ENCODE measurements at regions of chr1 and their contacts with region 1.

Region 1: GRCh38 chr1:211514030-211514754 is 22.2 kb upstream of the RD3 start:
- DNase-seq: peak; percentile 94
- H3K4me3 Mint-ChIP-seq: peak overlapping the region; percentile 52
- H3K27ac Mint-ChIP-seq: peak overlapping the region; percentile 42
- H3K4me1 Mint-ChIP-seq: peaks cover 42% of the 10 kb centered on the region
- H3K27me3 Mint-ChIP-seq: no peaks in the 10 kb centered on the region
- CTCF ChIP-seq: peak; percentile 81

Region 2: GRCh38 chr1:210400043-210400840 is 1114.0 kb before region 1 on chr1:
- CTCF ChIA-PET with region 1: no interaction called
- intact Hi-C with region 1: loop called (anchors 5 kb)
- DNase-seq: peak; percentile 77
- H3K4me3 Mint-ChIP-seq: no peak overlapping the region
- H3K27ac Mint-ChIP-seq: no peak overlapping the region
- H3K4me1 Mint-ChIP-seq: peaks cover 8% of the 10 kb centered on the region
- H3K27me3 Mint-ChIP-seq: no peaks in the 10 kb centered on the region
- CTCF ChIP-seq: peak; percentile 82

Region 3: DNA sequence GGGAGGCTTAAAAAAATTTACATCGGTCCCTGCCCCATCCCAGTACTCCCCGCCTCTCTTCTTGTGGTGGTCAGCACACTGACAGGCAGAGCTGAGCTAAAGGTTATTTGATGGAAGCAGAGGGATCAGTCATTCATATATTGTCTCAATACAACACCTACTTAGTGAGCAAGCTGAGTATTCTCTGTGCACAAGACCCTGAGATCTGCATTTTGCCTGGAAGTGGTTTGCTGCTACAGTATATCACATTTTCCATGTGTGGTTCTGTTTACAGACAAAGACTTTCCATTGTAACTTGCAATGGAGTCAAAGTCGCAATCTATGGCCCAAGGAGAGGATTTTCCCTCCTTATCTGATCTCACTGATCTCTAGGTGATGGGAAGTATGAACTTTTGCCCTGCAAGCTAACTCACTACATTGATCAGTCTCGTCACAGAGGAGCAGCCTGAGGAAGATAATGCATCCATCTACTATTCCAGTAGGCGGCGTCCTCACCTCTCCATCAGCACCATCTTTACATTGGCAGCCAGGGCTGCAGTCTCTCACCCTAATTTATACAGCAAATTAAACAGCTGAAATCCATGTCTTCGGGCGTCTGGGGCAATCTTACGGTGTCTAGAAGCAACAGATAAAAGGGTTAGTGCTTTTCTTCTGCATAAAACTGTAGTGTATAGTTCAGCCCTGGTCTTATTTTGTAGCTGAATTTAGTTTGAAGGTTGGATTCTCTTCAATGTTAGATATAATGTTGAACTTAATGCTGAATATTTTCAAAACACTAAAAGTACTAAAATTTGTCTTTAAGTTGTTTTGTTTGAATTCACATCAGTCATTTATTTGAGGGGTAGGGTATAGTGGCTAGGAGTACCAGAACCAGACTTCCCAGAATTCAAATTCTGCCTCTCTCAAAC is 190.8 kb before region 1 on chr1:
- CTCF ChIA-PET with region 1: interaction called, 7 read pairs
- intact Hi-C with region 1: loop called (anchors 1 kb)
- DNase-seq: peak; percentile 70
- H3K4me3 Mint-ChIP-seq: no peak overlapping the region
- H3K27ac Mint-ChIP-seq: no peak overlapping the region
- H3K4me1 Mint-ChIP-seq: peaks cover 25% of the 10 kb centered on the region
- H3K27me3 Mint-ChIP-seq: no peaks in the 10 kb centered on the region
- CTCF ChIP-seq: peak; percentile 73

Region 4: GRCh38 chr1:211469938-211470529 is 44.2 kb before region 1 on chr1:
- CTCF ChIA-PET with region 1: interaction called, 12 read pairs
- intact Hi-C with region 1: loop called (anchors 1 kb)
- DNase-seq: peak; percentile 94
- H3K4me3 Mint-ChIP-seq: no peak overlapping the region
- H3K27ac Mint-ChIP-seq: no peak overlapping the region
- H3K4me1 Mint-ChIP-seq: peaks cover 13% of the 10 kb centered on the region
- H3K27me3 Mint-ChIP-seq: no peaks in the 10 kb centered on the region
- CTCF ChIP-seq: peak; percentile 98

Region 5: GRCh38 chr1:211551628-211552460 is 37.7 kb after region 1 on chr1:
- CTCF ChIA-PET with region 1: interaction called, 7 read pairs
- intact Hi-C with region 1: loop called (anchors 5 kb)
- DNase-seq: peak; percentile 56
- H3K4me3 Mint-ChIP-seq: peak overlapping the region; percentile 31
- H3K27ac Mint-ChIP-seq: peak overlapping the region; percentile 40
- H3K4me1 Mint-ChIP-seq: peaks cover 14% of the 10 kb centered on the region
- H3K27me3 Mint-ChIP-seq: no peaks in the 10 kb centered on the region
- CTCF ChIP-seq: no peak

Region 6: DNA sequence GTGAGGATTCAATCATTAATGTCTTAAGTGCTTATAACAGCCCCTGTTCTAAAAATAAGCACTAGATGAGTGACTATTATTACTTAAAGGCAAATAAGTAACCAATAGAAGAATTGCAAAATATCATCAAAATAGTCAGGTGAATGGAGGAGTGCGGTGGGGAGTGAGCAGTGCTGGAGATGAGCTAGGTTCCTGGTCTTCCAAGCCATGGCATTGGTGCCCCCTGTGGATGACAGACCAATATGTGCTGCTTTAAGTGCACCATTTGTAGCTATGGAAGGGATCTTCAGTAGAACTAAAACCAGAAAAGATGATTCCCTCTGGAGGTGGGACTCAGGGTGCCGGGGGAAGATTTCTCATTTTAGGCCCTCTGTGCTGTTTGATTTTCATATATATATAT is 110.8 kb after region 1 on chr1:
- CTCF ChIA-PET with region 1: interaction called, 15 read pairs
- intact Hi-C with region 1: no loop called
- DNase-seq: no peak
- H3K4me3 Mint-ChIP-seq: no peak overlapping the region
- H3K27ac Mint-ChIP-seq: no peak overlapping the region
- H3K4me1 Mint-ChIP-seq: no peaks in the 10 kb centered on the region
- H3K27me3 Mint-ChIP-seq: no peaks in the 10 kb centered on the region
- CTCF ChIP-seq: no peak

Region 7: GRCh38 chr1:211654838-211655787 is 140.9 kb after region 1 on chr1:
- CTCF ChIA-PET with region 1: interaction called, 20 read pairs
- intact Hi-C with region 1: no loop called
- DNase-seq: peak; percentile 93
- H3K4me3 Mint-ChIP-seq: no peak overlapping the region
- H3K27ac Mint-ChIP-seq: no peak overlapping the region
- H3K4me1 Mint-ChIP-seq: peaks cover 16% of the 10 kb centered on the region
- H3K27me3 Mint-ChIP-seq: no peaks in the 10 kb centered on the region
- CTCF ChIP-seq: peak; percentile 93